PC-9 (cell line): ENCODE measurements at regions of chr17 and their contacts with region 1.

Region 1: GRCh38 chr17:62101090-62101489 is 36.0 kb upstream of the MED13 start:
- DNase-seq: no peak
- H3K4me3 ChIP-seq: no peak overlapping the region
- H3K27ac ChIP-seq: no peak overlapping the region
- H3K4me1 ChIP-seq: no peaks in the 10 kb centered on the region
- H3K27me3 ChIP-seq: no peaks in the 10 kb centered on the region
- CTCF ChIP-seq: no peak

Region 2: DNA sequence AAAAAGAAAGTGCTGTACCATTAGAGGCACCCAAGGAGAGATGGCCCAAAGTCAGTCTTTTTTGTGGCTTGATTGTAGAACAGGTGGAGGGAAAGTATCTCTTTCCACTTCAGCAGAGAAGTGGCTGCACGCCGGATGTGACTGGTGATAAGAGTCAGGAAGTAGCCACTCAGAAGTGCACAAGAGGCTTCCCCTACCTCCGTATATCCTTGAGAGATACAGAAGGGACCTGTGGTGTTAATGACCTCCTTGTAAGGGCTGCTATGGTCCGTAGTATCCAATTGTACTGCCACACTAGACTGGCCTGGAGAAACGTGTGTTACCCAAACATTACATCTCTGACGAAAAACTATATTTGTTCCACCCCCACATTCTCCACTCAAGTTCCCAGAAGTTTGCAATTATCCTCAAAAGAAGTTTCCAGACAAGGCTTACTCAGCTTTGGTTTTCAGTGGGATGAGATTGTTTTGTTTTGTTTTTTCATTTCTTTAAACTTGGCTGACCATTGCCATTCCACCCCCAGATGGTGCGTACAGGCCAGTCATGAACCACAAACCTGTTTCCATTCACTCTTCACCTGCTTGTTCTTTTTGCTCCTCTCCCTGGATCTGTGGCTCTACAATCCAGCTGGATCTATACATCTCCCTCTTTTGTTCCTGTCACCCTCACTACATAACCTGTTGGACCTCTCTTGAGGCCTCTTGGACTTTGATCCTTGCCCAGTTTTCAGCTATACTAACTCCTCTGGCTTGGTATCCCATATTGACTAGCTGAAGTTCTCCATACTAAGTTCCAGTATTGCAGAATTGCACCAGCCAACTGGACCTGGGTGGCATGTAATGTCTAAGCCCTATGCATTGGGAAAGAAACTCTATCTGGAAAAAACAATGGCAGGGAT is 15.3 kb before region 1 on chr17:
- CTCF ChIA-PET with region 1: interaction called, 14 read pairs
- POLR2A ChIA-PET with region 1: no interaction called
- intact Hi-C with region 1: no loop called
- DNase-seq: no peak
- H3K4me3 ChIP-seq: no peak overlapping the region
- H3K27ac ChIP-seq: no peak overlapping the region
- H3K4me1 ChIP-seq: no peaks in the 10 kb centered on the region
- H3K27me3 ChIP-seq: no peaks in the 10 kb centered on the region
- CTCF ChIP-seq: no peak